ENCODE measurements at regions of chr19 and their contacts with region 1.

Region 1: GRCh38 chr19:18304458-18305310 is 18.2 kb downstream of the LSM4 start:
- DNase-seq: peak; percentile 77
- H3K4me3 Mint-ChIP-seq: peak overlapping the region; percentile 88
- H3K27ac Mint-ChIP-seq: peak overlapping the region; percentile 94
- H3K4me1 Mint-ChIP-seq: peaks cover 32% of the 10 kb centered on the region
- H3K27me3 Mint-ChIP-seq: no peaks in the 10 kb centered on the region

Region 2: GRCh38 chr19:18074190-18074589 is 230.5 kb before region 1 on chr19:
- intact Hi-C with region 1: no loop called
- DNase-seq: no peak
- H3K4me3 Mint-ChIP-seq: no peak overlapping the region
- H3K27ac Mint-ChIP-seq: no peak overlapping the region
- H3K4me1 Mint-ChIP-seq: peaks cover 8% of the 10 kb centered on the region
- H3K27me3 Mint-ChIP-seq: no peaks in the 10 kb centered on the region

Region 3: DNA sequence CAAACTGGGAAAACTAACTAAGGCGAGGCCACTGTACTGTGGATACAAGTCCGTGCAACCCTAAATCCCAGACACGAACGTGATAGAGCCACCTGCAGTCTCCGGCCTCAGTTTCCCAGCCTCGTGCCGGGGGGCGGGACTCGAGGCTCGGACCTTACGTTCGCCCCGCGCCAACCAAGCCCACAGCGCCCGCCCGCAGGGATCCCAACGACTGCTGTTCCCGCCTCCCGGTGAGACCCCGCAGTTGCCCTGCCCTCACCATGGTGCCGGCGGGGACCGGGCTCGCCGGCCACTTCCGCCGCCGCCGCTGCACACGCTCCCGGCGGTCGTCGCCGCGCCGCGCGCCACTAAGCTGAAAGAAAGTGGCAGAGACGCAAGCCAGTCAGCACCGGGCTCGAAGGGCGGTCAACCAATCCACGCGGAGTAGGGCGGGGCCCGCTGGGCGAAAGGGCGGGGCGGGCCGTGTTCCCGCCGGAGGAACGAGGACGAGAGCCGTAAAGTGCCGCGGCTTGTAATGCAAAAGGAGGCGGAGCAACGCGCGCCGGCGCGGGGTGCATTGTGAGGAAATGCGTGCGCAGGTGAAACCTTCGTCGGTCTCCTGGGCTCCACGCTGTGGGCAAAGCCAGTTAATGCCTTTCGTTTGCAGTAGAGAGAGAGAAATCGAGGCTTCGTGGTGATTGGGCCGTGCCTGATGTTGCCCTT is 18.2 kb after region 1 on chr19 and contains the start of gene LSM4:
- intact Hi-C with region 1: loop called (anchors 1 kb)
- DNase-seq: peak; percentile 99
- H3K4me3 Mint-ChIP-seq: peak within 1 kb of the TSS; percentile 94
- H3K27ac Mint-ChIP-seq: peak within 1 kb of the TSS; percentile 97
- H3K4me1 Mint-ChIP-seq: peaks cover 47% of the 10 kb centered on the region
- H3K27me3 Mint-ChIP-seq: no peaks in the 10 kb centered on the region
- total RNA-seq, gene LSM4: 198 and 208 TPM in 2 replicates

Region 4: DNA sequence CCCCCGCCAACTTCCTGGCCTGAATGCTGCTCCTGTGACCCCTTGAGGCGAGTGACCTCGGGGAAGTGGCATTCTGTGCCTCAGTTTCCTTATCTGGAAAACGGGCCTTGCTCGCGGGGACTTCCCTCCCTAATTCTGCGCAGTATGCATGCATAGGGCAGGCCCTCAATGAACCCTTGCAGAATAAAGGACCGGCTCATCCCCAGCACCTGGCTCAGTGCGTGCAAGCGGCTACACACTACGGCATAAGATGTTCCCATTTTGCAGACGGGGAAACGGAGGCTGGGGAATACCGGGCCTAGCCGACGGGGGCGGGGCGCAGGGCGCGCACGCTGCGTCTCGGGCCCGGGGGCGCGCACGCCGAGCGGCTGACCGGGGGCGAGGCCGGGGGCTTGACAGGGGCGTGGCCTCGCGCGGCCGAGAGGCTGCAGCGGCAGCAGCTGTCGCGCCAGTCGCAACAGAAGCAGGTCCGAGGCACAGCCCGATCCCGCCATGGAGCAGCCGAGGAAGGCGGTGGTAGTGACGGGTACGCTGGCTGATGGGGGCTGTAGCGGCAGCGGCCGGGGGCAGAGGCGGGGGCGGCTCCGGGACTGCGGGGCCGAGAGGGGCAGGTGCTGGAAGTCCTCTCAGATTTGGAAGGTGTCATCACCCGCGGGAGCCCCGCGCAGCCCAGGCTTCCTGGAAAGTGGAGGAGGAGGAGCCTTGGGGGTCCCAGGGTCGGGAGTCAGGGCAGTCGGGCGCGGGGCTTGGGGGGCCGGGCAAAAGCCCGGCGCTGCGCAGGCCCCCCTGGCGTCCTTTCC is 35.7 kb after region 1 on chr19 and contains the start of gene PGPEP1:
- intact Hi-C with region 1: loop called (anchors 2 kb)
- DNase-seq: peak; percentile 50
- H3K4me3 Mint-ChIP-seq: peak within 1 kb of the TSS; percentile 86
- H3K27ac Mint-ChIP-seq: peak within 1 kb of the TSS; percentile 89
- H3K4me1 Mint-ChIP-seq: peaks cover 6% of the 10 kb centered on the region
- H3K27me3 Mint-ChIP-seq: no peaks in the 10 kb centered on the region
- total RNA-seq, gene PGPEP1: 24.9 and 29.4 TPM in 2 replicates